SK-N-SH (cell line): ENCODE measurements at regions of chr11 and their contacts with region 1.

Region 1: DNA sequence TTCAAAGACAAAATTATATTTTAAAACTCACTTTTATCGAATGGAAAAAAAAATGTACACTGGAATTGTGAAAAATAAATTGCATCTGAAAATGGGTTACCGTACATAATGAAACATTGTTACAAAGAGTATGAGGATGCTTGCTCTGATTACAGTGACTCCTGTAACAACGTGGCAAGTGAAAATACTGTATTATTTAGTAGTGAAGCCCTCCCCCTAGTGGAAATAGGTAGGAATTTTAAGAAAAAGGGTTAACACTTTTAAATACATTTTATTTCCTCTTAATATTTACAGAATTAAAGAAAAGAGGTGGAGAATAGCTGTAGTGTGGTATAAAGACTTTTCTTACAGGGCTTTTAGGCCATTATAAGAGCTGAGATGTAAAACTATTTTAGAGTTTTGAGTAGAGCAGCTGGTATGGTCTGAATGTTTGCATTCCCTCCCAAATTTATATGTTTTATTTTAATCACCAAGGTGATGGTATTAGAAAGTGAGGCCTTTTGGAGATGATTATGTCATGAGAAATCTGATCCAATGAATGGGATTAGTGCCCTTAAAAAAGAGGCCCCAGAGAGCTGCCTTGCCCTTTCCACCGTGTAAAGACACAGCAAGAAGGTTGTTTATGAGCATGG is 25.2 kb downstream of the FAM76B start:
- DNase-seq: peak; percentile 42
- H3K4me3 ChIP-seq: no peak overlapping the region; a peak in 1 of 4 replicates
- H3K27ac ChIP-seq: no peak overlapping the region
- H3K4me1 ChIP-seq: no peaks in the 10 kb centered on the region
- H3K27me3 ChIP-seq: no peaks in the 10 kb centered on the region
- CTCF ChIP-seq: peak; percentile 79
- EP300 ChIP-seq: no peak
- RAD21 ChIP-seq: peak; percentile 89

Region 2: GRCh38 chr11:95150946-95151684 is 613.3 kb before region 1 on chr11:
- CTCF ChIA-PET with region 1: interaction called, 112 read pairs
- POLR2A ChIA-PET with region 1: no interaction called
- DNase-seq: peak; percentile 78
- H3K4me3 ChIP-seq: no peak overlapping the region; a peak in 1 of 4 replicates
- H3K27ac ChIP-seq: no peak overlapping the region
- H3K4me1 ChIP-seq: peaks cover 24 to 27% of the 10 kb centered on the region in 2 experiments
- H3K27me3 ChIP-seq: no peaks in the 10 kb centered on the region
- CTCF ChIP-seq: peak; percentile 58
- EP300 ChIP-seq: no peak
- RAD21 ChIP-seq: no peak

Region 3: DNA sequence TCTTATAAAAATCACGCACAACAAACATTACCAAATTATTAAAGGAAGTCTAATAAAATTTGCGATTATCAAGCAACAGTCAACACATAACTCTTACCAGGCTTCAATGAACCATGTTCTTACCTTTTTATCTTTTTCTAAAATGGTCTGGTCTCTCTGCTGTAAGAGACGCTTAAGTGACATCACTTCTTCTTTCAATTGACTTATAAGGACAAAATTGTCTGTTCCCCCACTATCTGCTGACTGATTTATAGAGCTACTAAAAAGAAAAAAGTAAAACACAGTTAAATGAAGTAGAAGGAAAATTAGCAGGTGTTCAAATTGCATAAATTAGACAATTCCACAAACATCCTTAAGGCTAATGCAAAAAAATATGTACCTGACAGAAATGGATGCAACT is 14.3 kb after region 1 on chr11:
- CTCF ChIA-PET with region 1: interaction called, 19 read pairs
- POLR2A ChIA-PET with region 1: no interaction called
- DNase-seq: no peak
- H3K4me3 ChIP-seq: no peak overlapping the region
- H3K27ac ChIP-seq: no peak overlapping the region
- H3K4me1 ChIP-seq: no peaks in the 10 kb centered on the region; a peak in 2 of 4 replicates
- H3K27me3 ChIP-seq: no peaks in the 10 kb centered on the region
- CTCF ChIP-seq: no peak
- EP300 ChIP-seq: no peak
- RAD21 ChIP-seq: no peak